GM12878 (cell line): ENCODE measurements at regions of chr12 and their contacts with region 1.

Region 1: GRCh38 chr12:96587691-96588090 is 98.3 kb downstream of the CFAP54 start:
- DNase-seq: no peak
- ATAC-seq: no peak
- H3K4me3 ChIP-seq: no peak overlapping the region
- H3K27ac ChIP-seq: no peak overlapping the region
- H3K4me1 ChIP-seq: no peaks in the 10 kb centered on the region
- H3K27me3 ChIP-seq: no peaks in the 10 kb centered on the region
- CTCF ChIP-seq: no peak
- EP300 ChIP-seq: no peak
- POLR2A ChIP-seq: no peak
- RAD21 ChIP-seq: no peak

Region 2: DNA sequence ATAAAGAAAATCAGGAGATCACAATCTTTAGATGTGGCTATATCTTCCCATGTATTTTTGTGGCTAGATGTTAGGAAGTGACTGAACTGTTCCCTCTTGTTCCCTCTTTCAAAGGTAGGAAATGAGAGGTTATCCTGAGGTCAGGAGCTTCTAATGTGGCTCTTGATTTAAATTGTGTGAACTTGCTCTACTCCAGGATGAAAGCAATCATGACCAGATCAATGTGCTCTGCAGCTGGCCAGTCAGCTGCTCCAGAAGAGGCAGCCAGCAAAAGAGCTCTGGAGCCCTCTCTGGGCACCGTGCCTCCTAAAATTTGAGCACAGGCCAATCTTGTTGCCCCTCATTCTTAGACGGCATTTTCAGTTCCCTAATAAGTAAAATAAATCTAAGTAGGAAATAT is 219.5 kb before region 1 on chr12:
- CTCF ChIA-PET with region 1: no interaction called
- POLR2A ChIA-PET with region 1: no interaction called
- RAD21 ChIA-PET with region 1: no interaction called
- SMC1A ChIA-PET with region 1: no interaction called
- in situ Hi-C with region 1: no loop called
- intact Hi-C with region 1: no loop called
- DNase-seq: no peak
- ATAC-seq: peak; percentile 58
- H3K4me3 ChIP-seq: no peak overlapping the region
- H3K27ac ChIP-seq: no peak overlapping the region
- H3K4me1 ChIP-seq: peaks cover 12% of the 10 kb centered on the region
- H3K27me3 ChIP-seq: no peaks in the 10 kb centered on the region
- CTCF ChIP-seq: no peak
- EP300 ChIP-seq: no peak
- POLR2A ChIP-seq: no peak
- RAD21 ChIP-seq: no peak

Region 3: DNA sequence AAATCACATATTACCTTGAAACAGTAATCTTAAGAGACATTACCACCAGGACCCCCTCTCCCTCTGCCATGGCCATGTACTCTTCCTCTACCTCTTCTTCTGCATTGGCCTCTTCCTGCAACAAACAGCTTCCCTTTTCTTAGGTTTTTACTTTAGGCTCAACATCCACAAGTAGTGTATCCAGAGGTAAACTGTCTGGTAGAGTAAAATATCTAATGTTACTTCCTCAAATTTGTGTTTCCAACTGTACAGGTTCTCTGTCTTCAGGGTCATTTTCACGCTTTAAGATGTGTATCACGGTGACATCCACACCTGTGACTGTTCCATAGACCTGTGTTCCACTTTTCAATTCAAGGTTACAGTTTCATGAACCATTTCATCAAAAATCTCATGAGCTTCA is 200.9 kb before region 1 on chr12:
- CTCF ChIA-PET with region 1: no interaction called
- POLR2A ChIA-PET with region 1: interaction called, 10 read pairs
- RAD21 ChIA-PET with region 1: no interaction called
- SMC1A ChIA-PET with region 1: no interaction called
- in situ Hi-C with region 1: no loop called
- intact Hi-C with region 1: no loop called
- DNase-seq: no peak
- ATAC-seq: peak; percentile 42
- H3K4me3 ChIP-seq: no peak overlapping the region
- H3K27ac ChIP-seq: no peak overlapping the region
- H3K4me1 ChIP-seq: no peaks in the 10 kb centered on the region
- H3K27me3 ChIP-seq: no peaks in the 10 kb centered on the region
- CTCF ChIP-seq: no peak
- EP300 ChIP-seq: no peak
- POLR2A ChIP-seq: no peak
- RAD21 ChIP-seq: no peak

Region 4: GRCh38 chr12:96534339-96534738 is 53.4 kb before region 1 on chr12:
- CTCF ChIA-PET with region 1: no interaction called
- POLR2A ChIA-PET with region 1: no interaction called
- RAD21 ChIA-PET with region 1: no interaction called
- SMC1A ChIA-PET with region 1: no interaction called
- in situ Hi-C with region 1: no loop called
- intact Hi-C with region 1: no loop called
- DNase-seq: no peak
- ATAC-seq: no peak
- H3K4me3 ChIP-seq: no peak overlapping the region
- H3K27ac ChIP-seq: no peak overlapping the region
- H3K4me1 ChIP-seq: no peaks in the 10 kb centered on the region
- H3K27me3 ChIP-seq: no peaks in the 10 kb centered on the region
- CTCF ChIP-seq: no peak
- EP300 ChIP-seq: no peak
- POLR2A ChIP-seq: no peak
- RAD21 ChIP-seq: no peak